ENCODE measurements at regions of chr15 and their contacts with region 1.

Region 1: DNA sequence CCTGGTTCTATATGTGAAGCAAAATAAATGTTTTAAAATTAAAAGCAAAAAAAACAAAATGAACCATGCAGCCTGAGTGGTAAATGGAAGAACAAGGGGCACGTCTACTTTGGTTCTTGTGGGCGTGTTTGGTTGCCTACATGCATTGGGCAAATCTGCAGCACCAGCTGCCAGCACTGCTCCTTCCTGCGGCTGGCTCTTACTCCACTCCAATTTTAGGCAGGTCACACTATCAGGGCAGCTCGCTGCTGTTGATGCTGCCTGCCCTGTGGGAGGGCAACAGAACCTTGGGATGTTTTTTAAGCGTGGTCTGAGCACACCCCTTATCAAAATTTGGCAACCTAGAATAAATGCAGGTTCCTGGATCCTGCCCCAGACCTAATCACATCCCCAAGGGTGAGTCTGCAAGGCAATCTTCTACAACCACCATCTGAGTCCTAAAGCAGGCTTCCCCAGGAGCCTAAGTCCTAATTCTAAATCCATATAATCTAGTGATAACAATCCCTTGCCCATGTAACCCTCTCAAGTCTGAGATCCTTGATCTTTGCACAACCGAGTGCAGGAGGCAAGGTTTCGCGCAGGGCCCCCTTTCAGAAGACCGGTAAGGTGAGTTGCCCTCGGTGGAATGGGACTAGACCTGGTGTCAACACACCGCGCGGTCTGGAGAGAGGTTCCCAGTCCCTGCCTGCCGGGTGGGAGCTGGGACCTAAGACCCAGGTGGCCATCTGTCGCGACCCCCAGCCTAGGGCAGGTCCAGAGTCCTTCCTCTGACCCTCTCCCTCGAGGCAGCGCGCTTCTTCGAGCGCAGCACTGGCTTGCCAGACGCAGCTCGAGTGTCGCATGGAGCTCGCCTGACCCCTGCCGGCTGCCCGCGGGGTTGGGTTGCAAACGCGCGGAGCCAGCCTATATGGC is 15.9 kb downstream of the IVD start:
- DNase-seq: peak; percentile 68 to 98 (median 84)

Region 2: GRCh38 chr15:40274350-40275274 is 146.9 kb before region 1 on chr15:
- intact Hi-C with region 1: loop called (anchors 2 kb)
- DNase-seq: peak; percentile 61 to 96 (median 82)

Region 3: DNA sequence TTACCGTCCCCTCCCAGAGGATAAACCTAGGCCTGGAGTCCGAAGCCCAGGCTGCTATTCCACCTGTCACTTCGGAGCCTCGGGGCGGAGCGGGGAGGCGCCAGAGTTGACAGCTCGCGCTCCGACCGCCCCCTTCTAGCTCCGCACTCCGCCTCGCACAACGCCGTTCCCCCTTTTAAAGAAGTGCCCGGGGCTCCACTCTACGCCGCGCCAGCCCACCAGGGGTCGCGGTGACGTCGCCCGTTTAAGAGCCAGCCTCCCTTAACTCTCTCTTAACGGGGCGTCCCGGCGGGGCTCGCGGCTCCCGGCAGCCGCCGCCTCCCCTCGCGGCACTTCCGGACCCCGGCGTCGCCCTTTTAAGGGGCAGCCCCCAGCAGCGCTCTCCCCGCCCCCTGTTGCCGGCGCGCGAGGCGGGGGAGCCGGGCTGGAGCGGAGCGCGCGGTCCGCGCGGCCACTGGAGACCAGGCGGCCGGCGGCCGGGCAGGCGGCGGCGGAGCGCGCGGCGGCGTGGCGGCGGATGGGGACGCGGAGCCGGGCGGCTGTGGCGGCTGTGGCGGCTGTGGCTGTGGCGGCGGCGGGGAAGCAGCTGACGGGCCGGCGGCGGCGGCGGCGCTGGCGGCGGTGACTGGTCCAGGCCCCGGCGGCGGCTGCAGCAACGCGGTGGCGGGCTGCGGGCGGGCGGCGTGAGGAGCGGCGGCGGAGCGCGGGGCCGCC is 98.1 kb before region 1 on chr15 and contains the start of gene INAFM2:
- intact Hi-C with region 1: loop called (anchors 1 kb)
- DNase-seq: peak; percentile 67 to 97 (median 85)

Region 4: DNA sequence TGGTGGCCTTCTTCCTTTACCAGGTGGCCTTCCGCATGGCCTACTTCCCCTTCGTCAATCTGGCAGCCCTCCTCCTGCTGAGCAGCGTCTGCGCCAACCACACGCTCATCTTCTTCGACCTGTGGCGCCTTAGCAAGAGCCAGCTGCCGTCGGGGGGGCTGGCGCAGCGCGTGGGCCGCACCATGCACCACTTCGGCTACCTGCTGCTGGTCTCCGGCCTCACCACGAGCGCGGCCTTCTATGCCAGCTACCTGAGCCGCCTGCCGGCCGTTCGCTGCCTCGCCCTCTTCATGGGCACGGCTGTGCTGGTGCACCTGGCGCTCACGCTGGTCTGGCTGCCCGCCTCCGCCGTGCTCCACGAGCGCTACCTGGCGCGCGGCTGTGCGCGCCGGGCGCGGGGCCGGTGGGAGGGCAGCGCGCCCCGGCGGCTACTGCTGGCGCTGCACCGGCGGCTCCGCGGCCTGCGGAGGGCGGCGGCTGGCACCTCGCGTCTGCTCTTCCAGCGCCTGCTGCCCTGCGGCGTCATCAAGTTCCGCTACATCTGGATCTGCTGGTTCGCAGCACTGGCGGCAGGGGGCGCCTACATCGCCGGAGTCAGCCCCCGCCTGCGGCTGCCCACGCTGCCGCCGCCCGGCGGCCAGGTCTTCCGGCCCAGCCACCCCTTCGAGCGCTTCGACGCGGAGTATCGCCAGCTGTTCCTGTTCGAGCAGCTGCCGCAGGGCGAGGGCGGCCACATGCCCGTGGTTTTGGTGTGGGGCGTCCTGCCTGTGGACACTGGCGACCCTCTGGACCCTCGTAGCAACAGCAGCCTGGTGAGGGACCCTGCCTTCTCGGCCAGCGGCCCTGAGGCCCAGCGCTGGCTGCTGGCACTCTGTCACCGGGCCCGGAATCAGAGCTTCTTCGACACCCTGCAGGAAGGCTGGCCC is 53.6 kb before region 1 on chr15:
- intact Hi-C with region 1: loop called (anchors 5 kb)
- DNase-seq: peak; percentile 57 to 96 (median 71)

Region 5: GRCh38 chr15:40506964-40507571 is 85.6 kb after region 1 on chr15:
- intact Hi-C with region 1: no loop called
- DNase-seq: peak; percentile 44 to 95 (median 72)

Measured in posterior cingulate gyrus (tissue), 11 donors.